Left colon (tissue), 2 donors: ENCODE measurements at regions of chr1 and their contacts with region 1.

Region 1: GRCh38 chr1:10430216-10431069 is at the start of gene CENPS:
- DNase-seq: peak; percentile 92 to 93
- ATAC-seq: peak; percentile 91
- total RNA-seq, gene CENPS: 11.8 to 11.9 TPM

Region 2: DNA sequence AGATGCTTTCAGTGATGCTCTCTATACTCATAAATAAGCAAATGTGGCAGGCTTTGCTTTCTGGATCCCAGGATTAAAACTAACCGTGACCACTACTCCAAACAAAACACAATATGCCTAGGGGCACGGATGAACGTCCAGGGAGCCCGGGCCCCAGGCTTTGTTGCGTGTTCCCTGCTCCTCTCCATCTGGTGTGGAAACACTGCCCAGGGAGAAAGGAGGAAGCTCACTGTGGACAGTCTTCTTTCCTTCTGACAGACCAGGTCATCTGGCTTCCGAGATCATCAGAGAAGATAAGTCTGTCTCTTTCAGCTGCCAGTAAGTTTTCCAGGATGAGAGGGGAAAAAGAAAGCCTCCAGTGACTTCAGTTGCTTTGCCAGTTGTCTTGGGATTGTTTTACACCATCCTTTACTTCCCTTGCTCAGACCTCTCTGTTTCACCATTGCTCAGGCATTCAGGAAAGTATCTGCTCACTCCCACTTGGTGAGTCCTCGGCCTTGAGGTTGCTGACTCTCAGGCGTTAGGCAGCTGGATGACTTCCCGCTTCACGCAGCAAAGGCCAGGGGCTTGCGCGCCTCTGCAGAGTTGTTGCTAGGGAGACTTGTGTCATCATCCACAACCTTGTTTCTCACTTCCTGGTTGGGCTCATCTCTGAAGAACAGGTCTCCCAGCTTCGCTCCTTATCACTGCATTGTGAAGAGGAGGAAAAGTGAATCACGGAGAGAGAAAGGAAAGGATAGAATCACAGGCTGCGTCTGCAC is 52.2 kb before region 1 on chr1:
- intact Hi-C with region 1: loop called in 1 of 2 experiments (anchors 5 kb)
- DNase-seq: peak in 1 of 2 donors; percentile 12
- ATAC-seq: peak; percentile 31

Region 3: DNA sequence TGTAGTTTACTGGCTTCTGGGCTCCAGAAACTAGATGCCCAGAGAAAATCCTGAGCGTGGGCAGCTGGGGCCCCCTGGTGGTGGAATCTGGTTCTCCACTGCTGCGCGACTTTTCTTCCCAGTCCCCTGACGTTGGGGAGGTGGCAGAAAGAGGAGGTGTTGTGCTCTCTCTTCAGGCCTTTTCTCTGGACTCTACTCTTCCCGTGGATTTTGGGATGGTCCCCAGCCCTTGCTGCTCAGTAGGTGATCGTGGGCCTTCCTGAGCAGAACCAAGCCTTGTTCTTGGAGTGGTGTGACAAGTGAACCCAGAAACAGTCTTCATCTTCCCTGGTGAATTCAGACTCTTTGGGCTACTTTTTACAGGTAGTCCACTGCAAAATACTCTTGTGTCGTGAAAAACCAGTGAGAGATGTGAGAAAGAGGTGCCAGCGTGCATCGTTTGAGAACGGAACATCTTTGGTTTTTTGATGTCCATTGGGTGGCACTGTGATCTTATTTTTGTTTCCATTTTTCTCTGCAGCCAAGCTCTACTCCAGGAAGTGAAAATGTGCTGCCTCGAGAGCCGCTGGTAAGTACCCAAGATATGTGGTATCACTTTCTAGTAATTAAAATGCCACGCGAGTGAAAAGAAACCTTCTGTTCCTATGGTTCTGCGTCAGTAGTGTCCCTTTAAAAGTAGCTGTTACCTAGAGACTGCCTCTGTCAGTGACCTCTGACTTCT is 64.5 kb after region 1 on chr1:
- intact Hi-C with region 1: loop called in 1 of 2 experiments (anchors 10 kb)
- DNase-seq: peak; percentile 55 to 87
- ATAC-seq: peak; percentile 90